GM12878 (cell line): ENCODE measurements at regions of chr1 and their contacts with region 1.

Region 1: DNA sequence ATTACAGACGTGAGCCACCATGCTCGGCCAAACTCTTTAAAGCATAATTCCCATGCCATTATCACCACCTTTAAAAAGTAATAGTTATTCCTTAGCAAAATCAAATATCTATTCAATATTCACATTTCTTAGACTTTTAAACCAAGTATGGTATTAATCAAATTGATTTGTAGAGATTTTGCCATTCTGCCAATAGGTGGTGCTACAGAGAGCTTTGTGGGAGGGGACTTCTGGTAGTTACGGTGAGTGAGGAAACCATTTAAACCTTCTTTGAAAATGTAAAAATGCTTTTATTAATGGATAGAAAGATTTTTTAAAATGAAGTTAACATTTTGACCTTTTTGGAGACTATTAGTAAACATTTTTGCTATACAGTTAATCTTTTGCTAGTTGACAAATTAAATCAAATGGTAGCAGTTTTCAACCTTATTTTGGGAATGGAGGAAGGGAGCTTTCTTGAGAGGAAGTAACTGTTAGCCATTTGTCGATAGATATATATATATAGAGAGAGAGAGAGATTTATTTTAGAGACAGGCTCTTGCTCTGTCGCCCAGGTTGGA is 19.3 kb downstream of the IARS2 start:
- DNase-seq: no peak
- ATAC-seq: peak; percentile 91
- H3K4me3 ChIP-seq: no peak overlapping the region
- H3K27ac ChIP-seq: no peak overlapping the region
- H3K4me1 ChIP-seq: no peaks in the 10 kb centered on the region
- H3K27me3 ChIP-seq: no peaks in the 10 kb centered on the region
- CTCF ChIP-seq: peak; percentile 42 to 58 (median 52); a peak in 4 of 6 replicates
- EP300 ChIP-seq: no peak
- POLR2A ChIP-seq: no peak
- RAD21 ChIP-seq: 0 out of 2 replicates have a peak, but pooled peaks have one; percentile 5

Region 2: GRCh38 chr1:219858980-219859379 is 254.2 kb before region 1 on chr1:
- CTCF ChIA-PET with region 1: no interaction called
- POLR2A ChIA-PET with region 1: no interaction called
- RAD21 ChIA-PET with region 1: no interaction called
- SMC1A ChIA-PET with region 1: no interaction called
- in situ Hi-C with region 1: no loop called
- intact Hi-C with region 1: no loop called
- DNase-seq: no peak
- ATAC-seq: no peak
- H3K4me3 ChIP-seq: no peak overlapping the region
- H3K27ac ChIP-seq: no peak overlapping the region
- H3K4me1 ChIP-seq: no peaks in the 10 kb centered on the region
- H3K27me3 ChIP-seq: no peaks in the 10 kb centered on the region
- CTCF ChIP-seq: no peak
- EP300 ChIP-seq: no peak
- POLR2A ChIP-seq: no peak
- RAD21 ChIP-seq: no peak

Region 3: DNA sequence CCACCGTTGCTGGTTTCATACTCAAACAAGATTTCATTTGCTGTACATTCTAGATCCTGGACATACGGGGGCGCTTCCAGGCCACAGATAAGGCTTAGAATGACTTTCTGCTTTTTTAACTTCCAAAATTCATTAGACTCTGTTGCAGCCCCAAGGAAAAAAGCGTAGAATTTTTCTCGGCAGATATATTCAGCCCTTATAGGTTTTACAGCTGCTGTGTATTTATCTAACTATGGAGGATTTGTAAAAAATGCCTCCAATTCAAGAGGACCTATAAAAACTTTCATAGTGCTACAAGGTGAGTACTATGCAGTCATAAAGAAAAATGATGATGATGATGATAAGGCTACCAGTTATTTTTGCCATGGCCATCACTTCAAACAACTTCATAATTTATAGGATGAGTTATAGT is 236.4 kb before region 1 on chr1:
- CTCF ChIA-PET with region 1: no interaction called
- POLR2A ChIA-PET with region 1: no interaction called
- RAD21 ChIA-PET with region 1: no interaction called
- SMC1A ChIA-PET with region 1: no interaction called
- in situ Hi-C with region 1: no loop called
- intact Hi-C with region 1: no loop called
- DNase-seq: no peak
- ATAC-seq: no peak
- H3K4me3 ChIP-seq: no peak overlapping the region
- H3K27ac ChIP-seq: no peak overlapping the region
- H3K4me1 ChIP-seq: no peaks in the 10 kb centered on the region
- H3K27me3 ChIP-seq: no peaks in the 10 kb centered on the region
- CTCF ChIP-seq: peak in 2 of 3 experiments; percentile 22 to 32; a peak in 3 of 6 replicates
- EP300 ChIP-seq: no peak
- POLR2A ChIP-seq: no peak
- RAD21 ChIP-seq: peak; percentile 47

Region 4: GRCh38 chr1:220099826-220100225 is 13.4 kb before region 1 on chr1:
- CTCF ChIA-PET with region 1: interaction called, 15 read pairs
- POLR2A ChIA-PET with region 1: interaction called, 3 read pairs
- RAD21 ChIA-PET with region 1: no interaction called
- SMC1A ChIA-PET with region 1: no interaction called
- in situ Hi-C with region 1: no loop called
- intact Hi-C with region 1: no loop called
- DNase-seq: no peak
- ATAC-seq: no peak
- H3K4me3 ChIP-seq: no peak overlapping the region
- H3K27ac ChIP-seq: no peak overlapping the region
- H3K4me1 ChIP-seq: no peaks in the 10 kb centered on the region
- H3K27me3 ChIP-seq: no peaks in the 10 kb centered on the region
- CTCF ChIP-seq: no peak
- EP300 ChIP-seq: no peak
- POLR2A ChIP-seq: no peak
- RAD21 ChIP-seq: no peak

Region 5: DNA sequence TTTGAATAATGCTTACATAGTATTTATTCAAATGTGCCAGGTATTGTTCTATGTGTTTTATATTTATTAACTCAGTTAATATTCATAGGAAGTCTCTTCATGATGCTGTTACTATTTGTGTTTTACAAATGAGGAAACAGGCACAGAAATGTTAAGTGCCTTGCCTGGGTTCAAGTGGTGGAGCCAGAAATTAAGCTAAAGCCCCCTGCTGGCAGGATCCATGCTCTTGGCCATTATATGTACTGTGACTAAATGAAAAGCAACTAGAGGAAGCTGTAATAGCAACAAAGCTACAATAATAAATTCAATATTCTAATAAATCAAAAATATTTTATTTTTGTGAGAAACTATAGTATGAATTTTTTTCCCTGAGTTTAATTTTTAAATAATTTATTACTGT is 10.7 kb after region 1 on chr1:
- CTCF ChIA-PET with region 1: interaction called, 54 read pairs
- POLR2A ChIA-PET with region 1: no interaction called
- RAD21 ChIA-PET with region 1: interaction called, 3 read pairs
- SMC1A ChIA-PET with region 1: interaction called, 4 read pairs
- in situ Hi-C with region 1: no loop called
- intact Hi-C with region 1: no loop called
- DNase-seq: no peak
- ATAC-seq: peak; percentile 75
- H3K4me3 ChIP-seq: no peak overlapping the region
- H3K27ac ChIP-seq: no peak overlapping the region
- H3K4me1 ChIP-seq: no peaks in the 10 kb centered on the region
- H3K27me3 ChIP-seq: no peaks in the 10 kb centered on the region
- CTCF ChIP-seq: peak; percentile 6 to 33 (median 27); a peak in 3 of 6 replicates
- EP300 ChIP-seq: no peak
- POLR2A ChIP-seq: no peak
- RAD21 ChIP-seq: 0 out of 2 replicates have a peak, but pooled peaks have one; percentile 4

Region 6: GRCh38 chr1:220207411-220207810 is 94.2 kb after region 1 on chr1:
- CTCF ChIA-PET with region 1: no interaction called
- POLR2A ChIA-PET with region 1: no interaction called
- RAD21 ChIA-PET with region 1: no interaction called
- SMC1A ChIA-PET with region 1: no interaction called
- in situ Hi-C with region 1: no loop called
- intact Hi-C with region 1: no loop called
- DNase-seq: no peak
- ATAC-seq: no peak
- H3K4me3 ChIP-seq: no peak overlapping the region
- H3K27ac ChIP-seq: no peak overlapping the region
- H3K4me1 ChIP-seq: no peaks in the 10 kb centered on the region
- H3K27me3 ChIP-seq: no peaks in the 10 kb centered on the region
- CTCF ChIP-seq: no peak
- EP300 ChIP-seq: no peak
- POLR2A ChIP-seq: no peak
- RAD21 ChIP-seq: no peak